ENCODE measurements at regions of chrX and their contacts with region 1.

Region 1: DNA sequence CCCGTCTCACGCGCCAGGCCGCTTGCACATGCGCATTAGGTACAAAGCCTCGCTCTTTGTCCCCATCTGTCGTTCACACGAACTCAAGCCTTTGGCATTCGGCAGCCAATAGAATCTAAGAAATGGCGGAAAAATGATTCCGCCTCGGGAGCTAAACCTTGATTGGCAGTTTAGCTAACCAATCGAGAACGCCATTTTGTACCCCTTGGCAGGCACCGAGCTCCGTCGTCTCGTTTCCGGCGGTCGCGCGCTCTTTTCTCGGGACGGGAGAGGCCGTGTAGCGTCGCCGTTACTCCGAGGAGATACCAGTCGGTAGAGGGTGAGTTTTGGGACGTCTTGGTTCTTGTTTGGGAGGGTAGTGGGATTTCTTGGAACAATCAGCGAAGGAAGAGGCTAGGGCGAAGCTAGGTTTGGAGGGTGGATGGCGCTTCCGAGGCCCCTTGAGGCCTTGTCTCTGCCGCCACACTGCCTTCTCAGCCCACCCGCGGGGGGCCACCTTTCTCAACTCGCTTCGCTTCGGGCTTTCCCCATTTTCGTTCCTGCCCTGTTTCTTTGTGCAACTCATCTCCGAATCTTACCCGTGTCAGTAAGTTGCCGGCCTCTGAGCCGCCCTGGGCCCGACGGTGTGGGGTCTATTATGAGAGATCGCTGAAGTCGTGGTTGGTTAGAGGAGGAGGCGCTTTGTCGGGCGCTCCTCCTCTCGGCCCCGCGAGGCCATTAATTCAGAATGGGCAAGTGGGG is at the start of gene NONO:
- DNase-seq: peak; percentile 91
- H3K4me3 Mint-ChIP-seq: peak within 1 kb of the TSS; percentile 88
- H3K27ac Mint-ChIP-seq: peak within 1 kb of the TSS; percentile 97
- H3K4me1 Mint-ChIP-seq: peaks cover 8% of the 10 kb centered on the region
- H3K27me3 Mint-ChIP-seq: no peaks in the 10 kb centered on the region
- total RNA-seq, gene NONO: 490 to 531 TPM

Region 2: GRCh38 chrX:70852303-70852702 is 431.3 kb before region 1 on chrX:
- CTCF ChIA-PET with region 1: no interaction called
- intact Hi-C with region 1: no loop called
- DNase-seq: no peak
- H3K4me3 Mint-ChIP-seq: no peak overlapping the region
- H3K27ac Mint-ChIP-seq: no peak overlapping the region
- H3K4me1 Mint-ChIP-seq: no peaks in the 10 kb centered on the region
- H3K27me3 Mint-ChIP-seq: no peaks in the 10 kb centered on the region

Region 3: DNA sequence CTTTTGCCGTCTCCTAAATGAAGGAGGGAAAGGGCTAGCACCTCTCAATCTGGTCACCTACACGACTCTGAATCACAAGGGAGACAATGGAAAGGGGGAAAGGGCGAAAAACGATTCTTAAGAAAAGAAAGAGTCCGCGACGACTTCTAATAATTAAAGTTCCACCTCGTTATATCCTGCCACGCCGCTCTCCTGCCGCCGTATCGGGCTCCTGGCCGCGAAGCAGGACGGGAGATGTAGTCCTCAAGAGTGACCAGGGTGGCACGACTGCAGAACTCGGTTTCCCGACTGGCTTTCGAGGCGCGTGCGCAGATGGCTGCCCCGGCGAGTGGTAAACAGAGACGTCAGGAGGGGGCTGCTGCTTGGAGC is 188.0 kb before region 1 on chrX and contains the start of gene FOXO4:
- CTCF ChIA-PET with region 1: no interaction called
- intact Hi-C with region 1: loop called (anchors 1 kb)
- DNase-seq: peak; percentile 91
- H3K4me3 Mint-ChIP-seq: peak within 1 kb of the TSS; percentile 82
- H3K27ac Mint-ChIP-seq: peak within 1 kb of the TSS; percentile 72
- H3K4me1 Mint-ChIP-seq: peaks cover 30% of the 10 kb centered on the region
- H3K27me3 Mint-ChIP-seq: no peaks in the 10 kb centered on the region
- total RNA-seq, gene FOXO4: 7.9 to 8.9 TPM

Region 4: GRCh38 chrX:71198066-71198465 is 85.5 kb before region 1 on chrX:
- CTCF ChIA-PET with region 1: no interaction called
- intact Hi-C with region 1: loop called (anchors 1 kb)
- DNase-seq: peak; percentile 45
- H3K4me3 Mint-ChIP-seq: peak overlapping the region; percentile 91
- H3K27ac Mint-ChIP-seq: peak overlapping the region; percentile 93
- H3K4me1 Mint-ChIP-seq: peaks cover 7% of the 10 kb centered on the region
- H3K27me3 Mint-ChIP-seq: no peaks in the 10 kb centered on the region

Region 5: DNA sequence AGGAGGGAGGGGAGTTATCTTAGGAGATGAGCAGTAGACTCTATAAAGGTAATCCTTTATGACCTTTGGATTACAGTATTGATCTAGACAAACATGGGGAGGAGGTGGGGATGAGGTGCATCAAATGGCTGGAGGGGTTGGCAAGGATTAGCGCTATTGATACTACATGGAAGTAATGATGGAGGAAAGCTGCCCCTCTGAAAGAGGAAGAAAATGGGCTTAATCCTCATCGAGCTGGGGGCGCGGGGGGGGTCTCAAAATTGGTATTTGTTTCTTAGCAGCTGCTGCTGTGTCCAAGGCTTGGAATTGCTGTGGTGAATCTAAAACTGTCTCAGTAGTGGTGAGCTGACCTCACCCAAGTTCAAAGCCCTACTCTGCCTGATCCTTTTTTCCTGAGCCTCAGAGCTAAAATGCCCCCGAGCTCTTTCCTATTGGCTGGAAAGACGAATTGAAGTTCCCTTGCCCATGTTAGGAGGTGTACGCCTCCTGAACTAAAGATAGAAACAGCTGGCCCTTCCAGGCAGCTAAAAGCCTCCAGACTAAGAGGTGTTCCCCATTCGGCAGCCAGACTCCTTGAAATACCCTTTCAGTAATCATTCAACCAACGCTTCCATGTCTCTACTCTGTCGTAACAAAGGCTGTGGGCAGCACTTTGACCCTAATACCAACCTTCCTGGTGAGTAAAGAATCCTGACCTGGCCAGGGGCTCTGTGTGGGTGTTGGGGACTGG is 17.8 kb after region 1 on chrX and contains the start of gene ITGB1BP2:
- CTCF ChIA-PET with region 1: no interaction called
- intact Hi-C with region 1: loop called (anchors 2 kb)
- DNase-seq: no peak
- H3K4me3 Mint-ChIP-seq: no peak within 1 kb of the TSS
- H3K27ac Mint-ChIP-seq: peak within 1 kb of the TSS; percentile 69
- H3K4me1 Mint-ChIP-seq: peaks cover 18% of the 10 kb centered on the region
- H3K27me3 Mint-ChIP-seq: no peaks in the 10 kb centered on the region
- total RNA-seq, gene ITGB1BP2: 4.4 to 5.1 TPM

Region 6: GRCh38 chrX:71532753-71533425 is 249.3 kb after region 1 on chrX and contains the start of gene OGT:
- CTCF ChIA-PET with region 1: no interaction called
- intact Hi-C with region 1: loop called (anchors 1 kb)
- DNase-seq: peak; percentile 96
- H3K4me3 Mint-ChIP-seq: peak within 1 kb of the TSS; percentile 96
- H3K27ac Mint-ChIP-seq: peak within 1 kb of the TSS; percentile 98
- H3K4me1 Mint-ChIP-seq: peaks cover 30% of the 10 kb centered on the region
- H3K27me3 Mint-ChIP-seq: no peaks in the 10 kb centered on the region
- total RNA-seq, gene OGT: 307 to 323 TPM